Activated CD4-positive, alpha-beta T cell treated with anti-CD3 and anti-CD28 coated beads for 36 hours (primary cell): ENCODE measurements at regions of chr2 and their contacts with region 1.

Region 1: DNA sequence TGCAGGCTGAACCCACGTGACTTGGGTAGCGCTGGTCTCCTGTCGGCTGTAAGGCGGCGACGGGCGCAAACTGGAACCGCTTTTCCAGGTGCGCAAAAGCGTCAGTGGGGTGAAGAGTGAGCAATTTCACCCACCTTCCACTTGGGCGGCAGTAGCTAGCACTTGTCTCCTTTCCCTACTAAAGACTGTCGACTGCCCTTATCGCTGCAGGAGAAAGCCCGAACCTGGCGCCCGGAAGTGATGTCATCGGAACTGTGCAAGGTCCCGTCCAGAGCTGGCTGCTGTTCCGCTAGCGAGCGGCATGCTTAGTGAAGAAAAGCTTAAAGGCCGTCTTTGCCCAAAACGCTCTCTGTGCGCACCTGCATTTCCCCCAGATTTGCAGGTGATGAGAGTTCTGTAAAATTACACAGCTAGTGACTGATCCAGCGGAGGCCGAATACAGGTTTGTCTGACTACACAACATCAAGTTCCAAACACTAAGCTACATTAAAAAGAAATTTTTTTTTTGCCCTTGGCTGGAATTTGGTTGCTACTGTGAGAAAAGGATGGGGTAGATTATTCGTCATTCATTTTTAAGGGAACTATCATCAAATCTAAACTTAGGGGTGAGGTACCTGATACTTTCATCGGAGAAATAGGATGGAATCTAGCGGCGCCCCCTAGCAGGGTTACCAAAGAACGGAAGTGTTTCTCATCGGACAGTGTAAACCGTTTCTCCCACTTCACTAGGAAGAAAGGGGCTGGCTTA is at the start of gene OSGEPL1:
- DNase-seq: peak; percentile 96
- ATAC-seq: peak; percentile 97
- H3K4me3 Mint-ChIP-seq: peak within 1 kb of the TSS; percentile 89
- H3K27ac Mint-ChIP-seq: peak within 1 kb of the TSS; percentile 96
- H3K4me1 Mint-ChIP-seq: peaks cover 15% of the 10 kb centered on the region
- H3K27me3 Mint-ChIP-seq: no peaks in the 10 kb centered on the region
- total RNA-seq, gene OSGEPL1: 9.8 to 11.6 TPM

Region 2: DNA sequence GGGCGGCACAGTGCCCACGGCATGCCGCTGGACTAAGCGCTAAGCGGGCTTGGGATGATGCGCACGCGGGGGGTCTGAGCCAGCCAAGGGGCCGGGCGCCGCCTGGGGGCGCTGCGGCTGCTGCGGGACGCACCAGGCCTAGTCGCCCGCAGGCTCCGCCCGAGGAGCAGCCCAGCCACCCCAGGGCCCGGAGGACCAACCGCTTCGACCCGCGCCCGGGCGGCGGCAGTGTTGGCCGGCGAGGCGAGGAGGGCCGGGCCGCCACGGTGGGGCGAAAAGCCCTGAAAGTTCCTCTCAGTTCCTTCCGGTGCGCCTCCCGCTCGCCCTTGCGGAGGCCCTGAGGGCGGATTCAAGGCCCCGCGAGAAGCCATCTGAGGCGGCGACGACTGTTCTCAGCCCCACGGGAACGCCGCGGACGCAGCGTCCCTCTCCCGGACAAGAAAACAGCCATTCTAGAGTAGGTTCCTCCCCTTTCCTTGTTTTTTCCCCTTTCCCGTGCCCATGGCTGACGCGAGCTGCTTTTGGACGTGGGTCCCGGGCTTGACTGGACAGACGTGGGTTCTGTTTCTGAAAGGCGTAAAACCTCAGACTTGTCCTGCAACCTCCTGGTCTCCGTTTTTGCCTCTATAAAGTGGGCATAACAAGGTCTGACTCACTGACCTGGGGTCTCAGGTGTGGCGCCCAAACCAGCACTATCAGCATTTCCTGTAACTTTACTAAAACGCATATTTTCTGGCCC is 88.2 kb before region 1 on chr2 and contains the start of gene ANKAR:
- CTCF ChIA-PET with region 1: interaction called, 20 read pairs
- POLR2A ChIA-PET with region 1: interaction called, 3 read pairs
- intact Hi-C with region 1: loop called in 1 of 2 experiments (anchors 1 kb)
- DNase-seq: peak; percentile 87
- ATAC-seq: peak; percentile 92
- H3K4me3 Mint-ChIP-seq: peak within 1 kb of the TSS; percentile 83
- H3K27ac Mint-ChIP-seq: peak within 1 kb of the TSS; percentile 95
- H3K4me1 Mint-ChIP-seq: peaks cover 27% of the 10 kb centered on the region
- H3K27me3 Mint-ChIP-seq: no peaks in the 10 kb centered on the region
- total RNA-seq, gene ANKAR: 2.5 to 2.7 TPM

Region 3: GRCh38 chr2:189783927-189784867 is 21.5 kb after region 1 on chr2 and contains the starts of genes ORMDL1 and PMS1:
- CTCF ChIA-PET with region 1: interaction called, 14 read pairs
- POLR2A ChIA-PET with region 1: interaction called, 7 read pairs
- intact Hi-C with region 1: loop called (anchors 1 kb)
- DNase-seq: peak; percentile 96
- ATAC-seq: peak; percentile 92
- H3K4me3 Mint-ChIP-seq: peak within 1 kb of the TSS; percentile 74
- H3K27ac Mint-ChIP-seq: peak within 1 kb of the TSS; percentile 94
- H3K4me1 Mint-ChIP-seq: peaks cover 52% of the 10 kb centered on the region
- H3K27me3 Mint-ChIP-seq: no peaks in the 10 kb centered on the region
- total RNA-seq, gene ORMDL1: 45.2 to 49.2 TPM
- total RNA-seq, gene PMS1: 45.8 to 47.4 TPM

Region 4: GRCh38 chr2:190069936-190070696 is 307.4 kb after region 1 on chr2:
- CTCF ChIA-PET with region 1: no interaction called
- POLR2A ChIA-PET with region 1: no interaction called
- intact Hi-C with region 1: loop called in 1 of 2 experiments (anchors 5 kb)
- DNase-seq: peak; percentile 42
- ATAC-seq: no peak
- H3K4me3 Mint-ChIP-seq: no peak overlapping the region
- H3K27ac Mint-ChIP-seq: no peak overlapping the region
- H3K4me1 Mint-ChIP-seq: no peaks in the 10 kb centered on the region
- H3K27me3 Mint-ChIP-seq: no peaks in the 10 kb centered on the region

Region 5: DNA sequence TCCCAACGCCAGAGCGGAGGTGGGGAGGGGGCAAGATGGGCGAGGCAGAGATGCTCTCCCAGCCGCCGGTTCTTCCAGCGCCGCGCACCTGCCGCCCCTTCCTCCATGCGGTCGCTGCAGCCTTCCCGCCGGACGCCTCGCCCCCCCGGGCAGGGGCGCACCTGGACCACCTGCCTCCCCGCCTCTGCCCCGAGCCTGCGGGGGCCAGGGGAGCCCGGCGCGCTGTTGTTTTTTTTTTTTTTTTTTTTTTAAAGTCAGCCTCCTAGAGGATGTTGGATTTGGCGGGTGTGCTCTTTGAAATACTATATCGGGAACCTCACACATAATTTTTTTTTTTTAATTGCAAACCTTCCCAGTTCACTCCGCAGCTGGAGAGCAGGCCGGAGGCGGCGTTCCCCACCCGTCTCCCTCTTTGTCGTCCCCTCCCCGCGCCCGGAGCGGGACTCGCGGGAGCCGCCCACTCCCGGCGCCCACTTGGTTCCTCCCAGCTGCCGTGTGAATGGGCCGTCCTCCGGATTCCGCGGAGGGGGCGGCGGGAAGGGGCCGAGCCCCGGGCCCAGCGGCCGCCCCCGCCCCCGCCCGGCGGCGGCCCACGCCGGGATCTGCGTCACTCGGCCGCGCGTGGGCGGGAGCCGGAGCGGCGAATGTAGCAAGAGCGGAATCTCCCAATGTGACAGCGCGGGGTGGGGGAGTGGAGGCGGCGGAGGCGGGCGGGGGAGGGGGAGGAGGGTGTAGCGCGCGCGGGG is 885.7 kb after region 1 on chr2:
- CTCF ChIA-PET with region 1: no interaction called
- POLR2A ChIA-PET with region 1: no interaction called
- intact Hi-C with region 1: loop called in 1 of 2 experiments (anchors 2 kb)
- DNase-seq: peak; percentile 88
- ATAC-seq: peak; percentile 54
- H3K4me3 Mint-ChIP-seq: peak overlapping the region; percentile 67
- H3K27ac Mint-ChIP-seq: peak overlapping the region; percentile 81
- H3K4me1 Mint-ChIP-seq: peaks cover 46% of the 10 kb centered on the region
- H3K27me3 Mint-ChIP-seq: no peaks in the 10 kb centered on the region